ENCODE measurements at regions of chr4 and their contacts with region 1.

Region 1: GRCh38 chr4:40897557-40898203 is 147.9 kb downstream of the NSUN7 start:
- DNase-seq: no peak
- H3K4me3 ChIP-seq: no peak overlapping the region
- H3K27ac ChIP-seq: no peak overlapping the region
- H3K4me1 ChIP-seq: peaks cover 0 to 9% (median 0%) of the 10 kb centered on the region in 4 donors
- H3K27me3 ChIP-seq: no peaks in the 10 kb centered on the region
- CTCF ChIP-seq: peak; percentile 62 to 81 (median 77)
- EP300 ChIP-seq: no peak
- POLR2A ChIP-seq: no peak

Region 2: DNA sequence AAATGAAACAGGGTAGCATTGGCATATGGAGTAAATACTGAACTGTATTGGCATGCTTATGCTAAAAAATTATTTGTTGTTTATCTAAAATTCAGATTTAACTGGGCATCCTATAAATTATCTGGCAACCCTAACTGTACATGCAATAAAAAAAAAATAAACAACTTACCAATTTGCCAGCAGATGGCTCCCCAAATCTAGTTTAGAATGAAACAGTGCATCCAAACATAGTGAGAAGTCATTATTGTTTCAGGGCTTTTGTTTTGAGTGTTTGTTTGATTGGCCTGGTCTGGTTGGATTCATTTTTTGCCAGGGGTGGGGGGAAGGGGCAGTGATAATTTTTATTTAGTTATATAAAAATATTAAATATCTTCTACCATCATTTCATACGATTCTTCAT is 160.8 kb before region 1 on chr4:
- intact Hi-C with region 1: loop called (anchors 10 kb)
- DNase-seq: no peak
- H3K4me3 ChIP-seq: no peak overlapping the region
- H3K27ac ChIP-seq: no peak overlapping the region
- H3K4me1 ChIP-seq: peaks cover 0 to under 1% (median 0%) of the 10 kb centered on the region in 4 donors
- H3K27me3 ChIP-seq: no peaks in the 10 kb centered on the region
- CTCF ChIP-seq: peak; percentile 16 to 29 (median 19)
- EP300 ChIP-seq: no peak
- POLR2A ChIP-seq: no peak

Measured in esophagus muscularis mucosa (tissue), 4 donors.